Activated T-helper 1 cell treated with anti-CD3 and anti-CD28 coated beads, Interleukin-12 subunit alpha, Interleukin-12 subunit beta, Interleukin-2, Interleukin-4 antibody, amounts not matched to agents 30 ng/mL and 10 ng/mL and 1 ng/mL, durations not matched to agents 14 hours and 24 hours and 36 hours (primary cell): ENCODE measurements at regions of chr6 and their contacts with region 1.

Region 1: DNA sequence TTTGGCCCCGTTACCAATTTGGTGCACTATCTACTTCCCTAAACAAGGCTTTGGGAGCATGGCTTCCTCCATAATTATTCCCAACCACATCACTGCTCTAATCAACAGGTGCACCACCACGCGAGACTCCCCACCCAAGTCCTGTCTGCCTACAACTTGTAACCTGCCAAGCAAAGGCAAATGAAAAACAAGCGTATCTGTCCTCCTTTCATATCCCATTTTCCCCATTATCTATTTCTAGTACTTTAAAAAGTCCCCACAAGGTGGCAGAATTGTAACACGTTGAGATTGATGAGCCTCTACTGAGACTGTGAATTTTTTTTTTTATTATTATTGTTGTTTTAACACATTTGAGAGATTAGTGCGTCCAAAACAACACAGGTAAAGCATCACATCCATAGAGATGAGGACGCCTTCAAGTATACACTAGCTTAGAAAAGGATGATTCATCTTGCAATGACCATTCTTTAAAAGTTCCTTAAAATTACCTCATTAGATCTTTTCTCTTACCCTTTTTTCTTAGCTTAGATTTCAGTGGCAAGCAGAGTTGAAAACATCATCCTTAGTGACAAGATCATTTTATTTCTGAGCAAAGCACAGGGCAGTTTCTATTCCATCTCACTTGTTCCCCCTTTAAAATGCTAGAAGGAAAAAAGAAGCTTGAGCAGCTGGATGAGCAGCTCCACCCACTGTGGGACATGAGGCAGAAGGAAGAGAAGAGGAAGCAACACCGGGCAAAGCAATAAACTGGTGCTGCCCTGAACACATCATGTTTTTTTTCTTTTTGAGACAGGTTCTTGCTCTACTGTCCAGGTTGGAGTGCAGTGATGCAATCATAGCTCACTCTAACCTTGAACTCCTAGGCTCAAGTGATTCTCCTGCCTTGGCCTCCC is 210.8 kb downstream of the ARHGAP18 start:
- DNase-seq: no peak
- H3K4me3 Mint-ChIP-seq: peak overlapping the region; percentile 43
- H3K27ac Mint-ChIP-seq: peak overlapping the region; percentile 42
- H3K4me1 Mint-ChIP-seq: peaks cover 79% of the 10 kb centered on the region
- H3K27me3 Mint-ChIP-seq: no peaks in the 10 kb centered on the region

Region 2: GRCh38 chr6:127893541-127893940 is 1605.7 kb before region 1 on chr6:
- intact Hi-C with region 1: loop called (anchors 10 kb)
- DNase-seq: no peak
- H3K4me3 Mint-ChIP-seq: peak overlapping the region; percentile 83
- H3K27ac Mint-ChIP-seq: peak overlapping the region; percentile 93
- H3K4me1 Mint-ChIP-seq: peaks cover 54% of the 10 kb centered on the region
- H3K27me3 Mint-ChIP-seq: no peaks in the 10 kb centered on the region

Region 3: DNA sequence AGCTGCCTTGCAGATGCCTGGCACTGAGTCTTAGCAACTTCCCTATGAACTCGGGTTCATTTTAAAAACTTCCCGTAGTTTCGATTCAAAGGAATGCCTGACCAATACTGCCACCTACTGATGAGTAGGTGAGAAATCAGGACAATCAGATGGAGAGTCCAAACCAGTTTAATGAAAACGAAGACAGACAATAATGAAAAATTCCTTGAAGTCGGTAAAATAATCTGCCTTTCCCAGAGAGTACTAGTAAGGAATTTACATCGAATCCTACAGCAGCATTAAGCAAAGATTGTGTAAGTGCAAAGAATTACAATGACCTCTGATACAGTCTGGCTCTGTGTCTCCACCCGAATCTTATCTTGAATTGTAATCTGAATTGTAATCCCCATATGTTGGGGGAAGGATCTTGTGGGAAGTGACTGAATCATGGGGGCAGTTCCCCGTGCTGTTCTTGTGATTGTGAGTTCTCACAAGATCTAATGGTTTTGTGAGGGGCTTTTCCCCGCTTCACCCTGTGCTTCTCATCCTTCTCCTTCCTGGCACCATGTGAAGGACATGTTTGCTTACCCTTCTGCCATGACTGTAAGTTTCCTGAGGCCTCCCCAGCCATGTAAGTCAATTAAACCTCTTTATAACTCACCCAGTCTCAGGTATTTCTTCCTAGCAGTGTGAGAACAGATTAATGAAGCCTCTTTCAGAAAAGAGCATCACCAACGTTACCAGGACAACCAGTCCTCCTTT is 76.4 kb after region 1 on chr6:
- intact Hi-C with region 1: loop called (anchors 1 kb)
- DNase-seq: no peak
- H3K4me3 Mint-ChIP-seq: no peak overlapping the region
- H3K27ac Mint-ChIP-seq: no peak overlapping the region
- H3K4me1 Mint-ChIP-seq: peaks cover 9% of the 10 kb centered on the region
- H3K27me3 Mint-ChIP-seq: peaks cover 12% of the 10 kb centered on the region

Region 4: DNA sequence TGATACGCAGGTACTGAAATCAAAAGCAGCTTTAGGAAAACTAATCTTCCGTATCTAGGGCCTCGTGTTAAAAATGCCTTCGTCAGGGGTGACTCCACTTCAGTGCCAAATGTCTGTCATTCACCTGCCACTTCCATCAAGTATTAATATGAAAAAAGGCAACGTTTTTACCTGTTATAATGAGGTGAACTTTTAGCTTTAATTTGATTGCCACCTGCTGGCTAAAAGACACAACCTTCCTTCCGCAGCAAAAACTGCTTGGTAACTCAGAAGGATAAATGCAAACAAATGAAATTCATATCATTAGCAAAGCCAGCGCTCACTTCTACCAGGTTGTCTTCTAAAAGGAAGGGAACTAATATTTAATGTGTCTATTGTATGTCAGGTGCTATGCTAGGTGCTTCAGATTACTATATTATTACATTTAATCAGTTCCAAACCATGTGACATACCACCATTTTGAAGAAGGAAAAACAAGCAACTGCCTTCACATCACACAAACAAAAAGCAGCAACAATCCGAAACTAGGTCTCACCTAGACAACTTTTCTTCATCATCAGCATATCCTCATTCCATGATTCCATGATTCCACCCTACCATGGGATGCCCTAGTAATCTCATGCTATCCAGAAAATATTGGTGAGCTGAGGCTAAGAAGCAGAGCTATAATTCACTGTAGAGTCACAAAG is 231.4 kb after region 1 on chr6:
- intact Hi-C with region 1: loop called (anchors 1 kb)
- DNase-seq: no peak
- H3K4me3 Mint-ChIP-seq: no peak overlapping the region
- H3K27ac Mint-ChIP-seq: peak overlapping the region; percentile 29
- H3K4me1 Mint-ChIP-seq: peaks cover 15% of the 10 kb centered on the region
- H3K27me3 Mint-ChIP-seq: peaks cover 4% of the 10 kb centered on the region

Region 5: DNA sequence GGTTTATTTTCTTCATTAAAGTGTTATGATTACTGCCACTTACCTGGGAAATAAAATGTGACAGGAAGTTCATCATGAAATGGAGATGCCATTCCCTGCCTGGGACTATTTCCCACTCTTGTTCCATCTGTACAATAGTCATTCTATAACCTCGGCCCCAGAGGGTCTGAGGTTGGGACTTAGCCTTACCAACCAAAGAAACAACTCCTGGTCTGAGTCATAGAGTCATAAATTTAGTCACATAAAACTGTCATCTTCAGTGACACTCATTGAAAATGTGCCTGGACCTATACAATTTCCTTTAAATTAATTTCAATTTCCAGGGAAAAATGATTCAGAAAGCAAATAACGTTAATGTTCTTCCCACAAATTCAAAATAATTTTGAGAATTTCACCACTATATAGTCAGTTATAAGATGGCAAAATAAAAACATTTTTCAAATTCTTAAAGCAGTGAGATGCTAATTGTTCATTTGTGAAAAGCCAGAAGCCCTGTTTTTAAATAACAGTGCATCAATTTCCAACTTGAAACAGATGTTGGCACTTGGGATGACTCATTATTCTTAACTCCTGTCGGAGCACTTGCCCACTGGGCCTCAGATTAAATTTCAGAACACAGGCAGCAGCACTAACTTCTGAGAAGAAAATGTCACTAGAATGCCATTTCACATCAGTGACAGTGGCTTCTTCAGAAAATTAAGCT is 1126.8 kb after region 1 on chr6:
- intact Hi-C with region 1: loop called (anchors 10 kb)
- DNase-seq: no peak
- H3K4me3 Mint-ChIP-seq: peak overlapping the region; percentile 15
- H3K27ac Mint-ChIP-seq: peak overlapping the region; percentile 81
- H3K4me1 Mint-ChIP-seq: peaks cover 49% of the 10 kb centered on the region
- H3K27me3 Mint-ChIP-seq: no peaks in the 10 kb centered on the region